ENCODE measurements at regions of chr6 and their contacts with region 1.

Region 1: DNA sequence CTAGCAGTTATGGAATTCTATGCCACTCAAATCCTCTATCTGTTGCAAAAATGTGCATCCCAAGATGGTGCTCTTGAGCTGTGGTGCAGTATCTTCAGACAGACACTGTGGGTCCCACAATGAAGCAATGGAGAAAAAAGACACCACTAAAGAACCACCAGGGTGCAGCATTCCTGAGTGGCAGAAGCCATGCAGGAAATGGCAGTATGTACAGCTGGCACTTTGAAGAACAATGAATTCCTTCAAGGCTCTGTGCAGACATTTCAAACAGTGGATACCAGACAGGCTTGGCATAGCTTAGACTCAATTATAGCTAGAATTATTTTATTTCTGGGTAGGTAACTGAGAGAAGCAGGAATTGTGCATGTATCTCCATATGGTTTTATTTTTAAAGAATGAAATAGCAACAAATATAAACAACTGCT is 24.0 kb upstream of the HDAC2 start:
- DNase-seq: peak in 1 of 2 experiments; percentile 51
- H3K4me3 ChIP-seq: no peak overlapping the region
- H3K27ac ChIP-seq: no peak overlapping the region
- H3K4me1 ChIP-seq: peaks cover 0 to 8% (median 5%) of the 10 kb centered on the region in 4 experiments; a peak in 5 of 7 replicates
- H3K27me3 ChIP-seq: no peaks in the 10 kb centered on the region
- CTCF ChIP-seq: peak; percentile 32 to 98 (median 88)
- EP300 ChIP-seq: no peak
- POLR2A ChIP-seq: no peak
- RAD21 ChIP-seq: peak; percentile 96 to 97

Region 2: GRCh38 chr6:114058440-114058839 is 63.5 kb after region 1 on chr6:
- CTCF ChIA-PET with region 1: interaction called, 37 read pairs
- POLR2A ChIA-PET with region 1: no interaction called
- DNase-seq: no peak
- H3K4me3 ChIP-seq: no peak overlapping the region
- H3K27ac ChIP-seq: no peak overlapping the region
- H3K4me1 ChIP-seq: no peaks in the 10 kb centered on the region
- H3K27me3 ChIP-seq: no peaks in the 10 kb centered on the region
- CTCF ChIP-seq: no peak
- EP300 ChIP-seq: no peak
- POLR2A ChIP-seq: no peak
- RAD21 ChIP-seq: no peak

Region 3: GRCh38 chr6:114090626-114091025 is 95.7 kb after region 1 on chr6:
- CTCF ChIA-PET with region 1: interaction called, 11 read pairs
- POLR2A ChIA-PET with region 1: no interaction called
- DNase-seq: no peak
- H3K4me3 ChIP-seq: no peak overlapping the region
- H3K27ac ChIP-seq: no peak overlapping the region
- H3K4me1 ChIP-seq: 0 out of 7 replicates have a peak, but pooled peaks cover 0 to 2% (median 0%) of the 10 kb centered on the region in 4 experiments
- H3K27me3 ChIP-seq: no peaks in the 10 kb centered on the region
- CTCF ChIP-seq: no peak
- EP300 ChIP-seq: no peak
- POLR2A ChIP-seq: no peak
- RAD21 ChIP-seq: no peak

Region 4: DNA sequence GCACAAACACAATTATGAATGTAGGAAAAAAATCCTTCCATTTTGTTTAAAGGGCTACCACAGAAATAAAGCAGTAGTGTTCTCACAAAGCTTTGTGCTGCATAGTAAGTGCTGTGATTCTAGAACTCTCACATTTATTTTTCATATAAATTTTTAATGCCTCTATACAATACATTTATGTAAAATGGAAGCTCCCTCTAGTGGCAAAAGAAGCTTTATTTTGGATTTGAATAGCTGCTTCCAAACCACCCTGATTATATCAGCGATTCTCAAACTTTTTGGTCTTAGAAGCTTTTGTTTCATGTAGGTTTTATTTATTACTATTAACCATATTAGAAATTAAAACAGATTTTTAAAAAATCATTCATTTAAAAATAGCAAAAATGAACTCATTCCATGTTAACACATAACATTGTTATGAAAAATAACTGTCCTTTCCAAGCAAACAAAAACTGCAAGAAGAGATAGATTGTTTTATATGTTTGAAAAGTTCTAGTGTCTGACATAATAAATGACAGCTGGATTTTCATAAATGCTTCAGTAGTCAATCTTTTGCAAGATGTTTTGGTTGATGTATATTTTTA is 309.5 kb after region 1 on chr6:
- CTCF ChIA-PET with region 1: interaction called, 10 read pairs
- POLR2A ChIA-PET with region 1: no interaction called
- DNase-seq: no peak
- H3K4me3 ChIP-seq: no peak overlapping the region
- H3K27ac ChIP-seq: no peak overlapping the region
- H3K4me1 ChIP-seq: no peaks in the 10 kb centered on the region
- H3K27me3 ChIP-seq: peaks cover 0 to 1% (median 0%) of the 10 kb centered on the region in 4 experiments; a peak in 1 of 7 replicates
- CTCF ChIP-seq: peak in 1 of 3 experiments; percentile 18; a peak in 2 of 4 replicates
- EP300 ChIP-seq: no peak
- POLR2A ChIP-seq: no peak
- RAD21 ChIP-seq: peak; percentile 7 to 13; a peak in 1 of 4 replicates